ENCODE measurements at regions of chr15 and their contacts with region 1.

Region 1: GRCh38 chr15:64731012-64731806 is 44.2 kb downstream of the RBPMS2 start:
- DNase-seq: peak; percentile 69 to 97
- H3K4me3 ChIP-seq: peak overlapping the region in 1 of 4 experiments; percentile 14; a peak in 1 of 8 replicates
- H3K27ac ChIP-seq: no peak overlapping the region
- H3K4me1 ChIP-seq: peaks cover 7 to 14% (median 10%) of the 10 kb centered on the region in 4 experiments
- H3K27me3 ChIP-seq: no peaks in the 10 kb centered on the region
- CTCF ChIP-seq: peak; percentile 73 to 97 (median 95)
- EP300 ChIP-seq: 0 out of 3 replicates have a peak, but pooled peaks of 1 of the 2 experiments have one; percentile 24
- POLR2A ChIP-seq: no peak; a peak in 1 of 3 replicates
- RAD21 ChIP-seq: peak; percentile 98

Region 2: GRCh38 chr15:64596701-64597476 is 134.3 kb before region 1 on chr15:
- CTCF ChIA-PET with region 1: no interaction called
- POLR2A ChIA-PET with region 1: no interaction called
- DNase-seq: no peak
- H3K4me3 ChIP-seq: no peak overlapping the region
- H3K27ac ChIP-seq: no peak overlapping the region
- H3K4me1 ChIP-seq: peaks cover 2 to 10% (median 5%) of the 10 kb centered on the region in 4 experiments; a peak in 5 of 7 replicates
- H3K27me3 ChIP-seq: no peaks in the 10 kb centered on the region
- CTCF ChIP-seq: no peak
- EP300 ChIP-seq: no peak
- POLR2A ChIP-seq: no peak
- RAD21 ChIP-seq: no peak

Region 3: GRCh38 chr15:64611085-64611725 is 120.0 kb before region 1 on chr15:
- CTCF ChIA-PET with region 1: no interaction called
- POLR2A ChIA-PET with region 1: no interaction called
- DNase-seq: no peak
- H3K4me3 ChIP-seq: no peak overlapping the region
- H3K27ac ChIP-seq: no peak overlapping the region
- H3K4me1 ChIP-seq: no peaks in the 10 kb centered on the region
- H3K27me3 ChIP-seq: no peaks in the 10 kb centered on the region
- CTCF ChIP-seq: no peak
- EP300 ChIP-seq: no peak
- POLR2A ChIP-seq: no peak
- RAD21 ChIP-seq: no peak

Region 4: DNA sequence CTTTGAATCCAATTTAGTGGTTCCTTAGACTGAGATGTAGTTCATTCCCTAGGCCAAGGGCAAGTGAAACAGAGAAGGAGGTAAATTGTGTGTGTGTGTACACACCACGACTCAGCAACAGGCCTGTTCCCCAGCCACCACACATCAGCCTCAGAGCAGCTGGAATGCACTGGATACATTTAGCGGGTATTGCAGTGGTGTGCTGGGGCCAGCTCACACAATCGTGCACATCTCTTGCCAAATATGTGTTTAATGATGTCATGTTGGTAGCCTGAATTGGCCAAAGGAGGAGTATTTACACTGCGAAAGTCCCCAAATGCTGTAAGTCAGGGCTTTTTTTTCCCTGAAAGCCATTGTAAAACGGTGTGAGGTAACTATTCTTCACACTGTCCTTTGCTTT is 38.1 kb before region 1 on chr15:
- CTCF ChIA-PET with region 1: interaction called, 262 read pairs
- POLR2A ChIA-PET with region 1: interaction called, 1,192 read pairs
- DNase-seq: no peak
- H3K4me3 ChIP-seq: no peak overlapping the region
- H3K27ac ChIP-seq: no peak overlapping the region
- H3K4me1 ChIP-seq: peaks cover 3 to 21% (median 10%) of the 10 kb centered on the region in 4 experiments; a peak in 5 of 7 replicates
- H3K27me3 ChIP-seq: peaks cover 0 to 2% (median 0%) of the 10 kb centered on the region in 4 experiments; a peak in 1 of 7 replicates
- CTCF ChIP-seq: no peak
- EP300 ChIP-seq: no peak
- POLR2A ChIP-seq: peak; percentile 22 to 57; a peak in 2 of 3 replicates
- RAD21 ChIP-seq: no peak

Region 5: GRCh38 chr15:64710664-64711428 is 20.4 kb before region 1 on chr15:
- CTCF ChIA-PET with region 1: interaction called, 28 read pairs
- POLR2A ChIA-PET with region 1: interaction called, 1,192 read pairs
- DNase-seq: no peak
- H3K4me3 ChIP-seq: no peak overlapping the region
- H3K27ac ChIP-seq: no peak overlapping the region
- H3K4me1 ChIP-seq: no peaks in the 10 kb centered on the region
- H3K27me3 ChIP-seq: no peaks in the 10 kb centered on the region
- CTCF ChIP-seq: no peak
- EP300 ChIP-seq: no peak
- POLR2A ChIP-seq: no peak
- RAD21 ChIP-seq: no peak

Region 6: GRCh38 chr15:64775551-64776401 is 44.6 kb after region 1 on chr15 and contains the start of gene RBPMS2:
- CTCF ChIA-PET with region 1: interaction called, 4 read pairs
- POLR2A ChIA-PET with region 1: interaction called, 13 read pairs
- DNase-seq: peak in 1 of 2 experiments; percentile 62
- H3K4me3 ChIP-seq: peak within 1 kb of the TSS; percentile 74 to 95 (median 88)
- H3K27ac ChIP-seq: peak within 1 kb of the TSS; percentile 81; the same call in 1 of the 2 replicates
- H3K4me1 ChIP-seq: peaks cover 23 to 34% (median 30%) of the 10 kb centered on the region in 4 experiments
- H3K27me3 ChIP-seq: no peaks in the 10 kb centered on the region
- CTCF ChIP-seq: no peak
- EP300 ChIP-seq: no peak
- POLR2A ChIP-seq: no peak; a peak in 1 of 3 replicates
- RAD21 ChIP-seq: no peak
- total RNA-seq, gene RBPMS2: 238 and 243 TPM in 2 replicates

Region 7: DNA sequence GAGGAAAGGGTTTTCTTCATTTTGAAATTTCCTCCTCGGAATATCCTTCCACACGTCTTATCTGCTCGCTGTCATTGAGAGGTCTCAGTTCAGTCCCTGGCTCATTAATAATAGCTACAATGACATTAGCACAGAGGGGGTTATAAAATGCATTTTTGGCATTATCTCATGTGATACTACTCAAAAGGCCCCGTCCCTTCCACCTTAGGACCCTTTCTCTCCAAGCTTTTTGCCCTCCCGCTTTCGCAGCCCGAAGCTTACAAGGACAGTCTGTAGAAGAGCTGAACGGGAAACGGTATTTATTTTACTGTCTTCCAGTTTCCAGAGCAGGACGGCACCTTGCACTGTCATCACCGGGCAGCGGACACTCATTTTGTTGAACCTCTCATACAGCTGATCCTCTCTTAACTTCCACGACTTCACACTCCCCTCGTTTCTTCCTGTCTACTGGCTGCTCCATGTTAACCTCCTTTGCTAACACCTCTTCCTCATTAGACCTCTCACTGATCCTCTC is 104.9 kb after region 1 on chr15:
- CTCF ChIA-PET with region 1: interaction called, 18 read pairs
- POLR2A ChIA-PET with region 1: interaction called, 7 read pairs
- DNase-seq: no peak
- H3K4me3 ChIP-seq: 0 out of 8 replicates have a peak overlapping the region, but pooled peaks of 1 of the 4 experiments have one; percentile 7
- H3K27ac ChIP-seq: no peak overlapping the region
- H3K4me1 ChIP-seq: peaks cover 0 to 7% (median 4%) of the 10 kb centered on the region in 4 experiments; a peak in 5 of 7 replicates
- H3K27me3 ChIP-seq: no peaks in the 10 kb centered on the region
- CTCF ChIP-seq: no peak
- EP300 ChIP-seq: no peak
- POLR2A ChIP-seq: no peak
- RAD21 ChIP-seq: no peak

Region 8: DNA sequence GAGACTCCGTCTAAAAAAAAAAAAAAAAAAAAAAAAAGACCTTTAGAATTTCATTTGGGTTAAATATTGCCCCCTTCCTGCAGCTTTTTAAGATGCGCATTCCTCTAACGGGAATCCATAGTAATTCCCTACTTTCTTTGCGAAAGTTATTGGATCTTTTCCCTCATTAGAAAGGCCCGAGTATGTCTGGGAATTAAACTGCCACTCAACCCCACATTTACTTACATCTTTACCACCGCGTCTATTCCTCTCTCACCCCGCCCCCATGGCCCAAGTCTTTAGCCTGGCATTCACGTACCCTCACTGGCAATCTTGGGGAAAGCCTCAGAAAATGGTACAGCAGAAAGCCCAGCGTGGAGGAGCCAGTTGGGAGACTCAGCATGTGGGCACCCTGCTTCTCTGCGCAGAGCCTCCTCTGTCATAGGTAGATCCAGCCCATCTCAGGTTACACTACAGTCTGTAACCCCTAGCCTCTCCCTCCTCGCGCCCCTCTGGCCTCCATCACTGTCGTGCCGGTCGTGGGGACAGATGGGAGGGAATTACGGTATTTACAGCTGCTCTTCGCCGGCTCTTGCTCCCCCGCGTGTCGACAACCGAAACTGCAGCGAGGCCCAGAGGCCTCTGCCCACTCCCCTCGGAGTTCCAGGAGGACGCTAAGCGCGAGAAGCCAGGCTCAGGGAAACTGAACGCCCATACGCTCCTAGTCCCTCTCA is 174.1 kb after region 1 on chr15:
- CTCF ChIA-PET with region 1: interaction called, 15 read pairs
- POLR2A ChIA-PET with region 1: interaction called, 4 read pairs
- DNase-seq: peak; percentile 93 to 96
- H3K4me3 ChIP-seq: peak overlapping the region; percentile 22 to 59 (median 42); a peak in 7 of 8 replicates
- H3K27ac ChIP-seq: peak overlapping the region; percentile 48; the same call in 1 of the 2 replicates
- H3K4me1 ChIP-seq: peaks cover 0 to 8% (median 3%) of the 10 kb centered on the region in 4 experiments; a peak in 5 of 7 replicates
- H3K27me3 ChIP-seq: no peaks in the 10 kb centered on the region
- CTCF ChIP-seq: peak; percentile 81 to 88 (median 85)
- EP300 ChIP-seq: no peak
- POLR2A ChIP-seq: no peak; a peak in 1 of 3 replicates
- RAD21 ChIP-seq: peak; percentile 83 to 89